ENCODE measurements at regions of chr2 and their contacts with region 1.

Region 1: DNA sequence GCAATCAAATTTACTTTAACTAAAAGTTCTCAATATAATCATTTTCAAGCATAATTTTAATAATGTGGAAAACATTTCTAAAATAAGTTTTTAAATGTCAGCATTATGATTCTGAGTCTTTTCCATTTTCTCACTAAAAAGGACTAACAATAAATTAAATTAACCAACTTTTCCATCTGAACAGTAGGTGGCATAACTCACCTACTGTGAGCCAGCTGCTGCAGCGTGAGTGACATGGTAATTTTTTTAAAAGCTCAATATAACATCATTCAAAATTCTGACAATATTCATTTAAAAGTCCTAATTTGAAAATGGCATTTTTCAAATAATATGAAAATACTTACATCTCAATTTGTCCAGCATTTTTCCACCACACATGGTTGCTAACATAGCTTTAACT is 66.5 kb downstream of the DTNB start:
- DNase-seq: no peak
- ATAC-seq: peak; percentile 58
- H3K4me3 Mint-ChIP-seq: no peak overlapping the region
- H3K27ac Mint-ChIP-seq: no peak overlapping the region
- H3K4me1 Mint-ChIP-seq: peaks cover 5% of the 10 kb centered on the region
- H3K27me3 Mint-ChIP-seq: no peaks in the 10 kb centered on the region

Region 2: GRCh38 chr2:25586726-25587144 is 20.2 kb before region 1 on chr2:
- CTCF ChIA-PET with region 1: interaction called, 14 read pairs
- POLR2A ChIA-PET with region 1: no interaction called
- intact Hi-C with region 1: no loop called
- DNase-seq: peak; percentile 65
- ATAC-seq: peak; percentile 88
- H3K4me3 Mint-ChIP-seq: no peak overlapping the region
- H3K27ac Mint-ChIP-seq: peak overlapping the region; percentile 68
- H3K4me1 Mint-ChIP-seq: peaks cover 18% of the 10 kb centered on the region
- H3K27me3 Mint-ChIP-seq: no peaks in the 10 kb centered on the region

Region 3: GRCh38 chr2:25618642-25619037 is 11.7 kb after region 1 on chr2:
- CTCF ChIA-PET with region 1: interaction called, 20 read pairs
- POLR2A ChIA-PET with region 1: no interaction called
- intact Hi-C with region 1: no loop called
- DNase-seq: no peak
- ATAC-seq: no peak
- H3K4me3 Mint-ChIP-seq: no peak overlapping the region
- H3K27ac Mint-ChIP-seq: no peak overlapping the region
- H3K4me1 Mint-ChIP-seq: no peaks in the 10 kb centered on the region
- H3K27me3 Mint-ChIP-seq: no peaks in the 10 kb centered on the region

Region 4: GRCh38 chr2:25673300-25674076 is 66.6 kb after region 1 on chr2 and contains the start of gene DTNB:
- CTCF ChIA-PET with region 1: interaction called, 5 read pairs
- POLR2A ChIA-PET with region 1: no interaction called
- intact Hi-C with region 1: loop called in 1 of 2 experiments (anchors 2 kb)
- DNase-seq: peak; percentile 86
- ATAC-seq: peak; percentile 74
- H3K4me3 Mint-ChIP-seq: peak within 1 kb of the TSS; percentile 79
- H3K27ac Mint-ChIP-seq: peak within 1 kb of the TSS; percentile 76
- H3K4me1 Mint-ChIP-seq: peaks cover 31% of the 10 kb centered on the region
- H3K27me3 Mint-ChIP-seq: peaks cover 11% of the 10 kb centered on the region
- total RNA-seq, gene DTNB: 17.1 to 33.5 TPM

Region 5: GRCh38 chr2:25851740-25852503 is 245.0 kb after region 1 on chr2:
- CTCF ChIA-PET with region 1: interaction called, 16 read pairs
- POLR2A ChIA-PET with region 1: no interaction called
- intact Hi-C with region 1: loop called (anchors 5 to 10 kb)
- DNase-seq: peak; percentile 38
- ATAC-seq: peak; percentile 90
- H3K4me3 Mint-ChIP-seq: peak overlapping the region; percentile 64
- H3K27ac Mint-ChIP-seq: peak overlapping the region; percentile 86
- H3K4me1 Mint-ChIP-seq: peaks cover 44% of the 10 kb centered on the region
- H3K27me3 Mint-ChIP-seq: no peaks in the 10 kb centered on the region

Region 6: DNA sequence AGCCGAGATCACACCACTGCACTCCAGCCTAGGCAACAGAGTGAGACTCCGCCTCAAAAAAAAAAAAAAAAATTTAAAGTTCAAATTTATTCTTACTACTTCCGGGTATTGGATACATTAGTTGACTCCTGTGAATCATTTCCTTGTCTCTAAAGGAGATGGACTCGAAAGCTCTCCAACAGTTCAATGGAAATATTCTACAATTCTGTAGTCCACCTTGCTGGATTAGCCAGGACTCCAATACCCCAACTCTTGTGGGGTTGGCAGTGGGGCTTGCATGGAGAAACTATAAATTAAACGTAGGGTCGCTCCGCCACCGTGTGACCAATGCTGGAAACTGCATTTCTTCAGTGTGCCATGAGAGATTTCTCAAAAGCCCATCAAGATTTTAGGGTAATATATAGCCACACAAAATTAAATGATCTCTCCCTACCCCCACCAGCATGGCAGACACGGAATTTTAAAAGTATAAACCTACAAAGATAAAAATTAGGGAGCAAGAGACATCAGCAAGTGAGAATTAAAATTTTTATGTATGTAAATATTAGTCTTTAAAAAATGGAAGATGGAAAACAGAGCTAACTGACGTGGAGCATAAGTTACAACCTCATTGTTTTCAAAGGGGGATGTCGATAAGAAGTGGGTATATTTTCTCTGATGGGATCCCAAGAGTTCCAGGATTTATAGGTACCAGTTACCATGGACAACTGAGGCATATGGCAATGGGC is 538.2 kb after region 1 on chr2:
- CTCF ChIA-PET with region 1: no interaction called
- POLR2A ChIA-PET with region 1: no interaction called
- intact Hi-C with region 1: loop called in 1 of 2 experiments (anchors 10 kb)
- DNase-seq: peak; percentile 80
- ATAC-seq: peak; percentile 76
- H3K4me3 Mint-ChIP-seq: no peak overlapping the region
- H3K27ac Mint-ChIP-seq: no peak overlapping the region
- H3K4me1 Mint-ChIP-seq: no peaks in the 10 kb centered on the region
- H3K27me3 Mint-ChIP-seq: peaks cover 10% of the 10 kb centered on the region